CD8-positive, alpha-beta T cell (primary cell): ENCODE measurements at regions of chr9 and their contacts with region 1.

Region 1: DNA sequence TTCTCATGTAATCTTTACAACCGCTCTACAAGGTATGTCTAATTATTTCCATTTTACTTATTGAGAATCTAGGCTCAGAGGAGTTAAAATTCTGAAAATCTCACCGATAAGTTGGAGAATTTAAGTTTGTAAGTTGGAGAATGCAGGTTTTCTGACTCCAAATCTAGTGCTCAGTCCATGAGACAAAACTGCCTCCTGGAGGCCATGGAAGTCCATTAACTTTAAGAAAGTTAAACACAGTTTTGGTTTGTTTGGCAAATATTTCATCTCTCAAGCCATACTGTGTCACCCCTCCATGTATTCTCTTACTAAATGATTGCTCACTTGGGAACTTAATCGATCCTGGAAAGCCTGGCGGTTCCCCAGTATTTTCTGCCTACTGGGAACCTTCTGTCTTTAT is 52.6 kb downstream of the INIP start:
- DNase-seq: peak in 1 of 9 experiments; percentile 15
- ATAC-seq: no peak
- H3K4me3 ChIP-seq: no peak overlapping the region
- H3K4me3 Mint-ChIP-seq: no peak overlapping the region
- H3K27ac ChIP-seq: no peak overlapping the region
- H3K27ac Mint-ChIP-seq: no peak overlapping the region
- H3K4me1 ChIP-seq: no peaks in the 10 kb centered on the region
- H3K4me1 Mint-ChIP-seq: no peaks in the 10 kb centered on the region
- H3K27me3 ChIP-seq: no peaks in the 10 kb centered on the region
- H3K27me3 Mint-ChIP-seq: no peaks in the 10 kb centered on the region
- CTCF ChIP-seq: no peak

Region 2: DNA sequence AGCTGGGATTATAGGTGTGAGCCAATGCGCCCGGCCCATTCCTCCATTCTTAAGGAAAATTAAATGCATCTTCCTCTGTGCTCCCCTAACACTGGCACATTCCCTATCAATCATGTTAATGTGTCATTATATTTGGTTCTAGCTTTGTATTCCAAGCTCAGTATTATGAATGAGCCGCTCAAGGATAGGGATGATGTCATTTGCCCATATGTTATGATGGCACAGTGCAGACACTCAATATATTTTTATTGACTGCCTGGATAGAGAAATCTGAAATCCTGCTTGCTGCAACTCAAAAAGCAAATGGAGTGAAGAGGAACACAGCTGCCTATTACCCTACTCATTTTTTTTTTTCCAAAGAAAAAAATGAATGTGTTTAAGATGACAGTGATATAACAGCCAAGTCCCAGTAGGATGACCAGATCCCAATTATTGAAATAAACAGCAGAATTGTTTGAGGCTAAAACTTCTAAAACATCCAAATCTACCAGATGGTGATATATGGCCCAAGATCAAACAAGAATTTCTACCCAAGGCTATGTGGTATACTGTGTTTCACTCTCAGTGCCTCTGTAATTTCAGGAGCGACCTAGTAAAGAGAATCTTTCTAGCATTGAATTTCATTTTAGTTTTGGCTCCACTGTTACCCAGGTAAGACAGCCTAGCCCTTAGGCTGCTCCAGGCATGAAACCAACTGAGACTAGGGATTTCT is 506.5 kb before region 1 on chr9:
- CTCF ChIA-PET with region 1: no interaction called
- POLR2A ChIA-PET with region 1: no interaction called
- intact Hi-C with region 1: no loop called
- DNase-seq: no peak
- ATAC-seq: no peak
- H3K4me3 ChIP-seq: no peak overlapping the region
- H3K4me3 Mint-ChIP-seq: no peak overlapping the region
- H3K27ac ChIP-seq: no peak overlapping the region
- H3K27ac Mint-ChIP-seq: no peak overlapping the region
- H3K4me1 ChIP-seq: no peaks in the 10 kb centered on the region
- H3K4me1 Mint-ChIP-seq: no peaks in the 10 kb centered on the region
- H3K27me3 ChIP-seq: no peaks in the 10 kb centered on the region
- H3K27me3 Mint-ChIP-seq: no peaks in the 10 kb centered on the region
- CTCF ChIP-seq: no peak

Region 3: GRCh38 chr9:112443200-112443599 is 222.1 kb before region 1 on chr9:
- CTCF ChIA-PET with region 1: interaction called, 5 read pairs
- POLR2A ChIA-PET with region 1: no interaction called
- intact Hi-C with region 1: loop called (anchors 1 to 5 kb)
- DNase-seq: peak in 5 of 9 experiments; percentile 7 to 60 (median 40)
- ATAC-seq: peak; percentile 48
- H3K4me3 ChIP-seq: no peak overlapping the region
- H3K4me3 Mint-ChIP-seq: no peak overlapping the region
- H3K27ac ChIP-seq: no peak overlapping the region
- H3K27ac Mint-ChIP-seq: no peak overlapping the region
- H3K4me1 ChIP-seq: no peaks in the 10 kb centered on the region
- H3K4me1 Mint-ChIP-seq: no peaks in the 10 kb centered on the region
- H3K27me3 ChIP-seq: no peaks in the 10 kb centered on the region
- H3K27me3 Mint-ChIP-seq: no peaks in the 10 kb centered on the region
- CTCF ChIP-seq: peak; percentile 55

Region 4: DNA sequence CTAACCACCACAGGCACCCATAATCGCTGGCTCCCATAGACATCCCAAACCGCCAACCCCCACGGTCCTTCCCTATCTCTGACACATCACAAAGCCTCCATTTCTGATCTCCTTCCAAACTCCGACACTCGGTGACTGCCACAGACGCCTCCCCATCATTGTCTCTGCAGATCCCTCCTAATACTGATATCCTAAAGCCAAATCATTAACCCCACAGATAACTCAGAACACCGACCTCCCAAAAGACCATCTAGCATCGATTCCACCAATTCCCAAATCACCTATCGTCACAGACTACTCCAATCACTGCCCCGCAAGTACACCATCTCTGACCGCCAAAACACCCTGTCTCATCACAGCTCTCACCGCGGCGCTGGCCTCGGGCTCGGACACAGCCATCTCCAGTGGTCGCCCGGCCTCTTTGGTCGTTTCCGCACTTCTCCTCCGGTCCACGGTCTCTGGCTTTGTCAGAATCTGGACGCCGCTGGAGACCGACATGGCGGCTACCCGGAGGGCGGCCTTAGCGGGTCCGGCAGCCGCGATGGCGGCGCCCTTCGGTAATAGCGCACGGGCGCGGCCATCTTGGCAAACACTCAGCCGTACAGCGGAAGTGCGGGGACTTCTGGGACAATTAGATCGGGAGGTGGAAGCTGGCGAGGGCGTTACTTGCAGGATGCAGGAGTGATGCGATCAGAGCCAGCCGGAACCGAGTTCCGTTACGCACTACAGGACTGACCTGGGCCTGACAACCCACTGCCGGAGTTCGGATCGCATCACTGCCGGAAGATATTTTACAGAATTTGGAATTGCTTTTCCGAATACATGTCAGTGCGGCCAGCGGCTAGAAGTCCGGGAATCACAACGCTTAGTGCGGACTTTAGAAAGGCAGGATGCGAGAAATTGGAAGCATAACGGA is 391.1 kb after region 1 on chr9 and contains the start of gene ZFP37:
- CTCF ChIA-PET with region 1: no interaction called
- POLR2A ChIA-PET with region 1: no interaction called
- intact Hi-C with region 1: no loop called
- DNase-seq: peak; percentile 39 to 87 (median 74)
- ATAC-seq: peak; percentile 86
- H3K4me3 ChIP-seq: peak within 1 kb of the TSS; percentile 67 to 76
- H3K4me3 Mint-ChIP-seq: no peak within 1 kb of the TSS
- H3K27ac ChIP-seq: peak within 1 kb of the TSS in 1 of 2 experiments; percentile 52
- H3K27ac Mint-ChIP-seq: no peak within 1 kb of the TSS
- H3K4me1 ChIP-seq: no peaks in the 10 kb centered on the region
- H3K4me1 Mint-ChIP-seq: no peaks in the 10 kb centered on the region
- H3K27me3 ChIP-seq: peaks cover 11% of the 10 kb centered on the region in 2 experiments
- H3K27me3 Mint-ChIP-seq: peaks cover 18% of the 10 kb centered on the region
- CTCF ChIP-seq: no peak
- total RNA-seq, gene ZFP37: 1.1 to 1.5 TPM